Activated B cell treated with CpG ODN at 0.5 μM for 24 hours (primary cell): ENCODE measurements at regions of chrX and their contacts with region 1.

Region 1: DNA sequence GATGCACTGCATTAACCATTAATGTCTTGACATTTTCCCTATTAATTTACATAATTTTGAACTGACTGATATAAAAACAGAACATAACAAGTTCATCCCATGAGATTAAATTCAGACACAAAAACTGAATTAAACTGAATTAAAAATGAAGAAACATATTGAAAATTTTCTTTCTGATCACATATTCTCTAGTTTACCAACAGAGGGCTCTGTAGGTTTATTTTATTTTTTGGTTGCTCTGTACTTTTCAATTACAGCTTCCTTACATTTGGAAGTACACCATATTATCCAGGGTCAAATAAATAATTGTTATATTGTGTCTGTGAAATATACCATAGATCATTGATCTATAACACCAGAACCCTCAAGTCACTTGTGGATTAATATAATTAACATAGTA is 27.3 kb upstream of the CT83 start:
- DNase-seq: no peak
- ATAC-seq: no peak
- H3K4me3 Mint-ChIP-seq: no peak overlapping the region
- H3K27ac Mint-ChIP-seq: no peak overlapping the region
- H3K4me1 Mint-ChIP-seq: no peaks in the 10 kb centered on the region
- H3K27me3 Mint-ChIP-seq: no peaks in the 10 kb centered on the region
- CTCF ChIP-seq: no peak

Region 2: GRCh38 chrX:116449169-116449568 is 40.9 kb before region 1 on chrX:
- CTCF ChIA-PET with region 1: no interaction called
- POLR2A ChIA-PET with region 1: no interaction called
- intact Hi-C with region 1: no loop called
- DNase-seq: no peak
- ATAC-seq: no peak
- H3K4me3 Mint-ChIP-seq: no peak overlapping the region
- H3K27ac Mint-ChIP-seq: no peak overlapping the region
- H3K4me1 Mint-ChIP-seq: no peaks in the 10 kb centered on the region
- H3K27me3 Mint-ChIP-seq: no peaks in the 10 kb centered on the region
- CTCF ChIP-seq: no peak

Region 3: GRCh38 chrX:116526010-116526409 is 35.9 kb after region 1 on chrX:
- CTCF ChIA-PET with region 1: no interaction called
- POLR2A ChIA-PET with region 1: no interaction called
- intact Hi-C with region 1: no loop called
- DNase-seq: no peak
- ATAC-seq: no peak
- H3K4me3 Mint-ChIP-seq: no peak overlapping the region
- H3K27ac Mint-ChIP-seq: no peak overlapping the region
- H3K4me1 Mint-ChIP-seq: no peaks in the 10 kb centered on the region
- H3K27me3 Mint-ChIP-seq: no peaks in the 10 kb centered on the region
- CTCF ChIP-seq: no peak

Region 4: GRCh38 chrX:117607561-117607960 is 1117.5 kb after region 1 on chrX:
- CTCF ChIA-PET with region 1: no interaction called
- POLR2A ChIA-PET with region 1: no interaction called
- intact Hi-C with region 1: no loop called
- DNase-seq: no peak
- ATAC-seq: no peak
- H3K4me3 Mint-ChIP-seq: no peak overlapping the region
- H3K27ac Mint-ChIP-seq: no peak overlapping the region
- H3K4me1 Mint-ChIP-seq: no peaks in the 10 kb centered on the region
- H3K27me3 Mint-ChIP-seq: no peaks in the 10 kb centered on the region
- CTCF ChIP-seq: no peak

Region 5: DNA sequence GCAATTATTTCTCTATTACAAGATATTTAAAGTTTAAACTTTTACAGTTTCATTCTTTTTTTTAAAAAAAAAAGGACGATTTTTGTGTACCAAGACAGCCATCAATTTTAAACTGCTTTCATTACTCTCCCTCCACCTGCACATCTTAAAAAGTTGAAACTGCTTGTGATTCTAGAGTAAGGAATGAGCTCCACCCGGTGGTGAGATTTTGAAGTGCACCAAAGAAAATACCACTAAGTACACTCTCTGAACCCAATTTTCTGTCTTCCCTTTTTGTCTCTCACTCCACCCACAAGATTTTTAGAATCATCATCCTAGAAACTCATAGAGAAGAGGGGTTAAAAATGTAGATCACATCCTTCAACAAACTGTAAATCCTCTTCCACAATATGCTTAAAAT is 1764.5 kb after region 1 on chrX:
- CTCF ChIA-PET with region 1: no interaction called
- POLR2A ChIA-PET with region 1: no interaction called
- intact Hi-C with region 1: loop called (anchors 10 kb)
- DNase-seq: no peak
- ATAC-seq: no peak
- H3K4me3 Mint-ChIP-seq: no peak overlapping the region
- H3K27ac Mint-ChIP-seq: no peak overlapping the region
- H3K4me1 Mint-ChIP-seq: no peaks in the 10 kb centered on the region
- H3K27me3 Mint-ChIP-seq: peaks cover 1% of the 10 kb centered on the region
- CTCF ChIP-seq: no peak